ENCODE measurements at regions of chrX and their contacts with region 1.

Region 1: GRCh38 chrX:69027181-69028005 is 137.9 kb downstream of the PJA1 start:
- DNase-seq: peak in 1 of 2 donors; percentile 44
- H3K4me3 ChIP-seq: no peak overlapping the region
- H3K27ac ChIP-seq: no peak overlapping the region
- H3K4me1 ChIP-seq: peaks cover 0 to 3% of the 10 kb centered on the region in 2 donors
- H3K27me3 ChIP-seq: no peaks in the 10 kb centered on the region
- CTCF ChIP-seq: no peak

Region 2: DNA sequence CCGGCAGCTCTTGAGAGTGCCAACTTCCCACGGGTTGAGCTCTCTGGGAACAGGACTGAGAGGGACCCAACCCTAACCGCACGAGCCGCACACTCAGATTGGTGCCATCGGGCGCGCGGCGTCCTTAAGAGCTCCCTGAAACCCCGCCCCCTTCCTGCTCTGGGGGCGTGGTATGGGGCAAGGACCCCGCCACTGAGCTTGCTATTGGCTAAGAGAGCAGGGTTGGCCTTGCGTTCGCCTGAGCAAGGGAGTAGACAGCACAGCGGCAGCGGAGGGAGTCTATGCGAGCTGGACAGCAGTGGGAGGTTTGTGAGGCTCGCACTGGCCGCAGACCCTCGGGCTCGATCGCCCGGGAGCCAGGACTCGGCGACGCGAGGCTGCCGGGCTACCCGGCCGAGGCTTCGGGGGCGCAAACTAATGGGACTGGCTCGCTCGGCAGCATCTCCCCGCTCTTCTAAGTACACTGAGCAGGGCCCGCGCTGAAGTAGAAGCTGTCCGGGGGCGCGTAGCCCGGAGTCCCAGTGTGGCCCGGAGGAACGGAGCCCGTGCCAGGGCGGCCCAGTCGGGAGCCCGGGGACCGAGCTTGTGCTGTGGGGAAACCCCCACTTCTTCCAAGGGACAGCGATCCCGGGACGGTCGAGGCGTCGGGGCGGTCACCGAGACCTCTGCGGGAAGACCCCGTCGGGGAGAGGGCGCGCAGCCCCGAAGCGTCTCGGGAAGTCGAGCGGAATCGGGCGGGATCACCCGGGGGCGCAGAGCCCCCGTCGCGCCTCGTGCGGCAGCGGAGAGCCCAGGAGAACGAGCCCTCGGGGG is 198.4 kb before region 1 on chrX and contains the start of gene EFNB1:
- intact Hi-C with region 1: no loop called
- DNase-seq: peak; percentile 84 to 96
- H3K4me3 ChIP-seq: peak within 1 kb of the TSS; percentile 59 to 65
- H3K27ac ChIP-seq: peak within 1 kb of the TSS; percentile 76 to 82
- H3K4me1 ChIP-seq: no peaks in the 10 kb centered on the region
- H3K27me3 ChIP-seq: no peaks in the 10 kb centered on the region
- CTCF ChIP-seq: no peak
- total RNA-seq, gene EFNB1: 53.4 TPM

Region 3: GRCh38 chrX:68894513-68895340 is 132.7 kb before region 1 on chrX:
- intact Hi-C with region 1: loop called (anchors 10 kb)
- DNase-seq: peak; percentile 31 to 84
- H3K4me3 ChIP-seq: peak overlapping the region in 1 of 2 donors; percentile 54
- H3K27ac ChIP-seq: peak overlapping the region; percentile 97
- H3K4me1 ChIP-seq: peaks cover 3 to 13% of the 10 kb centered on the region in 2 donors
- H3K27me3 ChIP-seq: no peaks in the 10 kb centered on the region
- CTCF ChIP-seq: no peak

Region 4: DNA sequence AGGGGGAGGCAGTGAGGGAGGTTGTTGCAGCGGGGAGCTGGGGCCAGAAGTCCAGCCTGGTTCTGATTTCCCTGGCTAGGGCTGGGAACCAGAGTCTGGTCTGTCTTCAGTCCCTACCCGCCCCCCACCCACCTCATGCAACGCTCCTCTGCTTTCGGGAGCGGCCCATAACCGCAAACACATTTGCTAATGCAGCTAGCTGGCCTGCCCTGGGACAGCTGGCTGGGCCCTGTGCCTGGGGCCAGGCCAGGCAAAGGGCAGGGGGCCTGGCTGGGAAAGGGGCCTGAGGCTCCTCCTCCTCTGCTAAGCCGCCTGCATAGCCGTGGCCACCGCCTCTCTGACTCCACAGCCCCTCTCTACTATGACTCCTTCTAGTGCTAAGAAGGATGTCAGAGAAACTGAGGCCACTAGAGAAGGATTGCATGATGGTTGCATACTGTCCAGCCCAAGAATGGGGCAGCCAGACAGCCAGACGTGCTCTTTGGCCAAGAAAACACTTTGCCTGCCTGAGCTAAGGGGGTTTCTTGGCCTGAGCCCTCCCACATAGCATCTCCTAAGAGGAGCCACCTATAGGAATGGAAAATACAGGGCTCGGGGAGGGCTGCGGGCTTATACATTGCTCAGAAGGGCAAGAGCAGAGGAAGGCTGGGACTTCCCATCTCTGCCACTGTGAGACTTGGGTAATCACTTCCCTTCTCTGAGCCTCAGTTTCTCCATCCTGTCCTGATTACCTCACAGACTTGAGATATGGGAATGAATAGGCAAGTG is 61.0 kb after region 1 on chrX:
- intact Hi-C with region 1: loop called (anchors 10 kb)
- DNase-seq: no peak
- H3K4me3 ChIP-seq: no peak overlapping the region
- H3K27ac ChIP-seq: no peak overlapping the region
- H3K4me1 ChIP-seq: no peaks in the 10 kb centered on the region
- H3K27me3 ChIP-seq: no peaks in the 10 kb centered on the region
- CTCF ChIP-seq: no peak

Measured in ascending aorta (tissue), 2 donors.